ENCODE measurements at regions of chr11 and their contacts with region 1.

Region 1: GRCh38 chr11:16820324-16821092 is 82.1 kb downstream of the C11orf58 start:
- DNase-seq: peak; percentile 78
- CTCF ChIP-seq: peak; percentile 87

Region 2: GRCh38 chr11:16738193-16738946 is 82.1 kb before region 1 on chr11 and contains the start of gene C11orf58:
- CTCF ChIA-PET with region 1: no interaction called
- POLR2A ChIA-PET with region 1: no interaction called
- DNase-seq: peak; percentile 91
- CTCF ChIP-seq: no peak

Region 3: DNA sequence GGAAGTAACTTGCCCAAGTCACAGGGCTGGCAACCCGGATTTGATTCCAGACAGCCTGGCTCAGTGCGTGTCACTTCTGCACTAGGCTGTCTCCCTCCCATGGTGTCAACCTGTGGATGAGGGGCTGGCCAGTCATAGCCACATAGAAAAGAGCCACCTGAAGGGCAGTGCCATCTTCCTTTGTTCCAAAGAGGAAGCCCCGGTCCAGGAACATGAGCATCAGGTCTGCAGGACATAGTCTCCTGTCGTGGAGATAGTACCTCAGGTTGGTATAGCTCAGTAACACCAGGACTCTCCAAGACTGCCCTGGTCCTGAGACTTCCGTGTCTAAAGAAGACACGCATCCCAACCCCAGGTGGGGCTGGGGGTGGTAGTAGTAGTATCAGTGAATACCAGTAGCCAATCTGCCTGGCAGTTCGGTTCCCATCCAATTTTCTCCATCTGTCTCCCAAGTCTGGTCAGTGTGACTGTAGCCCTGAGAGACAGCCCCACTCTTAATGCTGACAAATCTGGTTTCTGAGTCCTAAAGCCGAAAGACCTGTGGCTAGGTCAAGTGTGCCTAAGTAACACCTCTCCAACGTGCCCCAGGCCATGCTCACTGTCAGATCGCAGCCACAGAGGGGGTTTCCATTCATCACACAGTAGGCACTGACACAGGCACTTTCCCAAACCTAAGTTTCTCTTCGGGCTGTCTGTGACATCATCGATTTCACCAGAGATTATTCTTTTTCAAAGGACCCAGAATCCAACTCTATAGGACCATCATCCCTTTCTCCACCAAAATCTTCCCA is 49.0 kb before region 1 on chr11:
- CTCF ChIA-PET with region 1: no interaction called
- POLR2A ChIA-PET with region 1: no interaction called
- DNase-seq: no peak
- CTCF ChIP-seq: no peak

Region 4: DNA sequence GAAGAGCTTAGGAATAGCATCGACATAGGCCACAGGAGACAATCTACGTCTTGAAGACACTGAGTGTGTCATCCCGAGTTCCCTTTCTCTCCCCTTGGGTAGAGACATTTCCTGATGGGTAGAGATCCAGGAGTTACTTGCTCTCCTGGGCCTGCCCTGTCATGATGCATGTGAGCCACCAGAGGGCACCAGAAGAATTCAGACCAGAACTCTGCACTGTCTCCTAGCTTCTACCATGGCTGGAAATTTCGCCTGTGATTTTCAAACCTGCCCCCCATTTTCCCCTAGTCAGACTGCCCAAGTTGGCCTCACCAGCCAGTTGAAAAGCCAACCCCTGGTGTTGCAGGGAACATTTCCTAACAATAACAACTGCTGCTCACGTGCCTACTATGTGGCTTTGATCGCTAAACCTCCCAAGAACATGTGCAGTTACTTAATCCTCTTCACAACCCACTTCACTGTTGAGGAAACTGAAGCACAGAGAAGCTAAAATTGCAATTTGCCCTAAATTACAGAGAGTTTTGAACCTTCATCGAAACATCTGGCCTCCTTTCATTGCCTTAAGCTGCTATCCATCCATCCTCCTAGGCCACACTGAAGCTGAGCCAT is 34.9 kb before region 1 on chr11:
- CTCF ChIA-PET with region 1: interaction called, 80 read pairs
- POLR2A ChIA-PET with region 1: no interaction called
- DNase-seq: peak; percentile 82
- CTCF ChIP-seq: peak; percentile 90

Region 5: GRCh38 chr11:16809886-16810668 is 10.4 kb before region 1 on chr11:
- CTCF ChIA-PET with region 1: interaction called, 31 read pairs
- POLR2A ChIA-PET with region 1: no interaction called
- DNase-seq: no peak
- CTCF ChIP-seq: no peak

Region 6: GRCh38 chr11:16846305-16846704 is 25.8 kb after region 1 on chr11:
- CTCF ChIA-PET with region 1: interaction called, 10 read pairs
- POLR2A ChIA-PET with region 1: no interaction called
- DNase-seq: no peak
- CTCF ChIP-seq: no peak

Region 7: GRCh38 chr11:16902781-16903378 is 82.4 kb after region 1 on chr11:
- CTCF ChIA-PET with region 1: interaction called, 20 read pairs
- POLR2A ChIA-PET with region 1: no interaction called
- DNase-seq: peak; percentile 37
- CTCF ChIP-seq: no peak

Region 8: GRCh38 chr11:16945671-16946469 is 125.4 kb after region 1 on chr11:
- CTCF ChIA-PET with region 1: interaction called, 11 read pairs
- POLR2A ChIA-PET with region 1: no interaction called
- DNase-seq: peak; percentile 78
- CTCF ChIP-seq: peak; percentile 81